Natural killer cell (primary cell): ENCODE measurements at regions of chr10 and their contacts with region 1.

Region 1: GRCh38 chr10:7035126-7035761 is 375.6 kb downstream of the SFMBT2 start:
- DNase-seq: peak; percentile 32 to 34
- ATAC-seq: peak; percentile 51 to 60 (median 53)
- H3K4me3 ChIP-seq: no peak overlapping the region
- H3K4me3 Mint-ChIP-seq: peak overlapping the region; percentile 84
- H3K27ac ChIP-seq: peak overlapping the region; percentile 50
- H3K27ac Mint-ChIP-seq: peak overlapping the region; percentile 93
- H3K4me1 ChIP-seq: peaks cover 38% of the 10 kb centered on the region
- H3K4me1 Mint-ChIP-seq: peaks cover 93 to 94% of the 10 kb centered on the region in 2 donors
- H3K27me3 ChIP-seq: no peaks in the 10 kb centered on the region
- H3K27me3 Mint-ChIP-seq: no peaks in the 10 kb centered on the region
- CTCF ChIP-seq: no peak

Region 2: GRCh38 chr10:7070950-7071349 is 35.7 kb after region 1 on chr10:
- intact Hi-C with region 1: loop called (anchors 1 kb)
- DNase-seq: peak in 1 of 2 donors; percentile 36
- ATAC-seq: peak in 2 of 3 donors; percentile 52 to 60
- H3K4me3 ChIP-seq: no peak overlapping the region
- H3K4me3 Mint-ChIP-seq: no peak overlapping the region
- H3K27ac ChIP-seq: no peak overlapping the region
- H3K27ac Mint-ChIP-seq: no peak overlapping the region
- H3K4me1 ChIP-seq: peaks cover 10% of the 10 kb centered on the region
- H3K4me1 Mint-ChIP-seq: peaks cover 10 to 17% of the 10 kb centered on the region in 2 donors
- H3K27me3 ChIP-seq: no peaks in the 10 kb centered on the region
- H3K27me3 Mint-ChIP-seq: no peaks in the 10 kb centered on the region
- CTCF ChIP-seq: peak; percentile 30